CD4-positive, alpha-beta memory T cell (primary cell): ENCODE measurements at regions of chr7 and their contacts with region 1.

Region 1: DNA sequence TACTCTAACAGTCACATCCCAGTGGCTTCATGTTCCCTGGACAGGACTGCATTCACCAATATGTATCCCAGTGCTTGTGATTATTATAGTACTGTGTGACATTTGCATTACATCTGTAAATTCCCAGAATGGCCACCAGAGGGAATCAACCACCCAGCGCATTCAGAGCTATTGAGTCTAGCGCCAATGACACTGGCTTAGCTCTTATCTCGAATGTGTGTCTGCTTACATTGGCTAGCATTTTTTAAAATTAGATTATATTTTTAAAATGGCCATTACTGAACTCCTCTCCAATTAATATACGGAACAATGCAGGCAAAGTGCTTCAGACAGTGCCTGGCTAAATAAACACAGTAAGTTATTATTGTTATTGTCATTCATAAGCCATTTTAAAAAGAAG is 36.3 kb downstream of the TRIL start:
- DNase-seq: peak in 4 of 5 donors; percentile 38 to 42 (median 39)
- H3K4me3 ChIP-seq: no peak overlapping the region
- H3K4me3 Mint-ChIP-seq: no peak overlapping the region
- H3K27ac ChIP-seq: no peak overlapping the region
- H3K27ac Mint-ChIP-seq: peak overlapping the region in 1 of 7 donors; percentile 3
- H3K4me1 ChIP-seq: peaks cover 11% of the 10 kb centered on the region
- H3K4me1 Mint-ChIP-seq: peaks cover 12 to 22% (median 17%) of the 10 kb centered on the region in 4 donors
- H3K27me3 ChIP-seq: no peaks in the 10 kb centered on the region
- H3K27me3 Mint-ChIP-seq: peaks cover 0 to 2% of the 10 kb centered on the region in 2 donors

Region 2: DNA sequence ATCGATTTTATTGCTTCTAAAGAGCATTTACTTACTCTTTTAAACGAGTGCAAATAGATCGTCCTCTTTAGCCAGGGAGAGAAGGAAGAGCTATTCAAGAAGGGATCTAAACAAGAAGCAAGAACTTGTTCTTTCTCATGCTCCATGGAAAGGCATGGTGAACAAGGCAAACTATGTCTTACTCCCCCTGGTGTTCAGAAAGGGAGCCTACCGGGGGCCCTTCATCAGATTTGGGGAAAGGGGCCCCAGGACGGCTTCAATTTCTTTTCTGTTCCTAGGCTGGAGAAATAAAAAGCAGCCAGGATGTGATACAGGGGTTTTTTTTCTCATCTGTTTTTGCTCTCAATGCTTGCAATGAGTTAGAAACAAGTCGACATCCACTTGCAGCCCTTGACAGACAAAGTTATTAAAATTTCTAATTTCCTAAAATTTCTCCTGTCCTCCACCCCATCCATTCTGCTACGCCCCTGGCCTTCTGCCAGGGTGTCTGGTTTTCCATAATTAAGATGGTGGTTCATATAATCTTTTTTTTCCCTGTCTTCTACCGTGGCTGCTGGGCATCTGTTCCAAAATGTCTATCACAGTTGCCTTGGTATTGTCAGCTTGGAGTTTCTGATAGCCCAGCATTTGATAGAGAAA is 295.1 kb before region 1 on chr7:
- CTCF ChIA-PET with region 1: no interaction called
- POLR2A ChIA-PET with region 1: no interaction called
- intact Hi-C with region 1: no loop called
- DNase-seq: peak in 2 of 5 donors; percentile 1 to 2
- H3K4me3 ChIP-seq: no peak overlapping the region
- H3K4me3 Mint-ChIP-seq: no peak overlapping the region
- H3K27ac ChIP-seq: no peak overlapping the region
- H3K27ac Mint-ChIP-seq: no peak overlapping the region
- H3K4me1 ChIP-seq: no peaks in the 10 kb centered on the region
- H3K4me1 Mint-ChIP-seq: no peaks in the 10 kb centered on the region
- H3K27me3 ChIP-seq: no peaks in the 10 kb centered on the region
- H3K27me3 Mint-ChIP-seq: peaks cover 0 to 2% of the 10 kb centered on the region in 2 donors

Region 3: GRCh38 chr7:28793381-28794085 is 128.3 kb before region 1 on chr7:
- CTCF ChIA-PET with region 1: no interaction called
- POLR2A ChIA-PET with region 1: no interaction called
- intact Hi-C with region 1: no loop called
- DNase-seq: no peak
- H3K4me3 ChIP-seq: no peak overlapping the region
- H3K4me3 Mint-ChIP-seq: no peak overlapping the region
- H3K27ac ChIP-seq: no peak overlapping the region
- H3K27ac Mint-ChIP-seq: no peak overlapping the region
- H3K4me1 ChIP-seq: no peaks in the 10 kb centered on the region
- H3K4me1 Mint-ChIP-seq: no peaks in the 10 kb centered on the region
- H3K27me3 ChIP-seq: no peaks in the 10 kb centered on the region
- H3K27me3 Mint-ChIP-seq: no peaks in the 10 kb centered on the region

Region 4: DNA sequence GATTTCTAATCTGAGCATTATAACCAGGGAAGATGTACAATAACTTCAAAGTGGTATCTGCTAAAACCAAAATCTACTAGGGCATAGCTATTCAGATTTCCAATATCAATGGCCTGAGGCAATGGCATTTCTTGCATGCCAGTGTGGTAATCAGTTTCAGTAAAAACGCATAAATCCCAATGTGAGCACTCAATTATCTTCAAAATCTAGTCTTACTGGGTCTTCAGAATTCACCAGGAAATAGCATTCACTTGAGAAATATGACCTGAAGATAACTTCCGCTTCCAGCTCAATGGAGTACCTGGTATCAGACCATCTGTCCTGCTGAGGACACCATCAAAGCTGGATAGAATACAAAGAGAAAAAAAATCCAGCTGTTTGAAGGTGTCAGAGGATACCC is 36.1 kb before region 1 on chr7:
- CTCF ChIA-PET with region 1: interaction called, 12 read pairs
- POLR2A ChIA-PET with region 1: no interaction called
- intact Hi-C with region 1: no loop called
- DNase-seq: no peak
- H3K4me3 ChIP-seq: no peak overlapping the region
- H3K4me3 Mint-ChIP-seq: no peak overlapping the region
- H3K27ac ChIP-seq: no peak overlapping the region
- H3K27ac Mint-ChIP-seq: no peak overlapping the region
- H3K4me1 ChIP-seq: no peaks in the 10 kb centered on the region
- H3K4me1 Mint-ChIP-seq: no peaks in the 10 kb centered on the region
- H3K27me3 ChIP-seq: no peaks in the 10 kb centered on the region
- H3K27me3 Mint-ChIP-seq: peaks cover 20 to 24% of the 10 kb centered on the region in 2 donors

Region 5: DNA sequence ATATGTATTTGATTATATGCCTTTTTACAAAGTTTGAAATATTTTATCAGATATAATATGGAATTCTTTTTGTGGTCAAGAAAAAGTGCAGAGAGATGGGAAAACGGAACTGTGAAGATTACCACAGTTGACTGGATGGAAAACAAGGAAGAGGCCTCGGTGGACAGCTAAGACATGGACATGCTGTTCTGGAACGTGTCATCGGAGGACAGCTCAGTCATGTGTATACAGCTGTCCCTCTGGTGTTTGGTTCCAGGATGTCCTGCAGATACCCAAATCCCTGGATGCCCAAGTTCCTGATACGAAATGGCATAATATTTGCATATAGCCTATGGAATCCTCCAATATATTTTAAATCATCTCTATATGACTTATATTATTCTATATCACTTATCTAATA is 13.0 kb before region 1 on chr7:
- CTCF ChIA-PET with region 1: interaction called, 94 read pairs
- POLR2A ChIA-PET with region 1: no interaction called
- intact Hi-C with region 1: no loop called
- DNase-seq: no peak
- H3K4me3 ChIP-seq: no peak overlapping the region
- H3K4me3 Mint-ChIP-seq: no peak overlapping the region
- H3K27ac ChIP-seq: no peak overlapping the region
- H3K27ac Mint-ChIP-seq: no peak overlapping the region
- H3K4me1 ChIP-seq: no peaks in the 10 kb centered on the region
- H3K4me1 Mint-ChIP-seq: no peaks in the 10 kb centered on the region
- H3K27me3 ChIP-seq: no peaks in the 10 kb centered on the region
- H3K27me3 Mint-ChIP-seq: peaks cover 4 to 6% of the 10 kb centered on the region in 2 donors

Region 6: DNA sequence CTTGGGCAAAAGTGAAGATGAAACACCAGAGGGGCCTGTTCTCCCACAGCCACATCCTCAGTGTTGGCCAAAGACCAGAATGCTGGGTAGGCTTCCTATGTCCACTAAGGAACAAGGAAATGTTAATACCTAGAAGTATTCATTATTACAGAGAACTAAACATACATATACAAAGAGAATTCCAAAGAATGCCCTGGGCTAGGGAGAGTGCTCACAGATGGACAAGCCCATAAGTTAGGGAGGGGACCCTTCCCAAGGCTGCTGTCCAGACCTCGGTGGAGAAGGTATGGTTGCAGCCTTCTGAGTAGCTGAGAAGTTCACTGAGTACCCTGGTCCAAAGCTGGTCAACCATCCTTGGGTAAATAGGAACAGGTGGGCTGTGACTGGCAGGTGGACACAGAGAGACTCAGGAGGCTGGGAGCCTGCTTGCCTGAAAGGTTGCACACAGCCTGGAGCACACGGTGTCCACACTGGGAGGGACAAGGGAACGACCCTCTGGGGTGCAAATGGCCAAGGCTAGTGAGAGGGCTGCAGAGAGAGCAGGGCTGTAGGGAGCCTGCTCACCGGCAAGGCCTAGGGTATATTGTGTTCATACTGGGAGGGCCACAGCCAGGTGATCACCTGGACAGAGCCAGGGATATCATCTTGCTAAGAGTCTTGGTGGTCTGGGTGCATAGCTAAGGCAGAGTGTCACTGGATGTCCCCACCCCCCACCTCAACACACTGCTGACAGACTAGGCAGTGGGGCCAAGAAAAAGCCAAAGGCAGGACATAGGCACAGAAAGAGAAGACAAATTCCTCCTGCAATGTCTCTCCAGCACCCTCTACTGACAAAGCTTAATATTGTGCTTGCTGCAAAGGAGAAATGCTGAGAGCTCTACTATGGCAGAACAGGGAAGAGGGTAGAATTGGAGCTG is 184.2 kb after region 1 on chr7:
- CTCF ChIA-PET with region 1: interaction called, 12 read pairs
- POLR2A ChIA-PET with region 1: no interaction called
- intact Hi-C with region 1: loop called (anchors 1 kb)
- DNase-seq: peak in 1 of 5 donors; percentile 3
- H3K4me3 ChIP-seq: no peak overlapping the region
- H3K4me3 Mint-ChIP-seq: no peak overlapping the region
- H3K27ac ChIP-seq: no peak overlapping the region
- H3K27ac Mint-ChIP-seq: peak overlapping the region in 1 of 7 donors; percentile 53
- H3K4me1 ChIP-seq: no peaks in the 10 kb centered on the region
- H3K4me1 Mint-ChIP-seq: peaks cover 0 to 3% (median 0%) of the 10 kb centered on the region in 4 donors
- H3K27me3 ChIP-seq: no peaks in the 10 kb centered on the region
- H3K27me3 Mint-ChIP-seq: peaks cover 0 to 6% of the 10 kb centered on the region in 2 donors

Region 7: GRCh38 chr7:29189743-29190201 is 267.9 kb after region 1 on chr7:
- CTCF ChIA-PET with region 1: interaction called, 8 read pairs
- POLR2A ChIA-PET with region 1: no interaction called
- intact Hi-C with region 1: loop called (anchors 1 kb)
- DNase-seq: peak; percentile 23 to 44 (median 32)
- H3K4me3 ChIP-seq: no peak overlapping the region
- H3K4me3 Mint-ChIP-seq: no peak overlapping the region
- H3K27ac ChIP-seq: no peak overlapping the region
- H3K27ac Mint-ChIP-seq: no peak overlapping the region
- H3K4me1 ChIP-seq: no peaks in the 10 kb centered on the region
- H3K4me1 Mint-ChIP-seq: peaks cover 0 to 6% (median 4%) of the 10 kb centered on the region in 4 donors
- H3K27me3 ChIP-seq: no peaks in the 10 kb centered on the region
- H3K27me3 Mint-ChIP-seq: peaks cover 5 to 14% of the 10 kb centered on the region in 2 donors